ENCODE measurements at regions of chr13 and their contacts with region 1.

Region 1: DNA sequence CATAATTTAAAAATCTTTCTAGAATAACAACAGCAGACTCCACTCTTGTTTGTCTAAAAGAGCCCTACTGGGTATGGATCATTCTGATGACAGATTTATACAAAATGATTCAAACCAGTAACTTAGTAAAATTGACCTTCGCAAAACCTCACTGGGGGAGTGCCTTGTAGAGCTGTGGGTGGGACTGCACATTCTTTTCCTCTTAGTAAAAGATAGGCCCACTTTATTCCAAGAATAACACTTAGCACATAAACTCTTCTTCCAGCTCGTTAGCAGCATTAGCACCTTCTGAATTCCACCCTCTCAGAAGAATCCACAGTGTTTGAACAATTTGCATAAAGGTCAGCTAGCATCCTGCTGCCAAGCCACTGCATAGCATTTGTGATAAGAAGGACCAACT is 106.8 kb downstream of the STOML3 start:
- DNase-seq: no peak
- H3K4me3 ChIP-seq: no peak overlapping the region
- H3K27ac ChIP-seq: no peak overlapping the region
- H3K4me1 ChIP-seq: peaks cover 2% of the 10 kb centered on the region
- H3K27me3 ChIP-seq: peaks cover 8 to 24% of the 10 kb centered on the region in 2 experiments
- CTCF ChIP-seq: no peak
- POLR2A ChIP-seq: no peak

Region 2: DNA sequence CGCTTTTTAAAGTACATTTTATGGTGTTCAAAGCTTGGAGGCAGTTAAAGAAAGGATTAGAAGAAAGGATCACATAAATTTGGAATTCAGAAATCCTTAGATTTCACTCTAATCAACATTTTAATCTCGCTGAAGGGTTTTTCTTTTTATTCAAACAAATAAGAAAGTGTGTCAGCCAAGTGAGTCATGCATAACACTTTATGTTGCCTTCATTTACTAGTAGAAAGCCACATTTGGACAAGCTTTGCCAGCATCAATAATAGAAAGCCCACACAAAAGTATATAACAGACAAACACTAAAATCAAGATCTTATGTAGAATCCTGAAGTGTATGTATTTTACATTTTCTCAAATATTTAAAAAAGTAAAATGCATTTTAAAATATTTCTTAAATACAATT is 859.4 kb before region 1 on chr13:
- CTCF ChIA-PET with region 1: no interaction called
- POLR2A ChIA-PET with region 1: no interaction called
- dilution Hi-C with region 1: no loop called
- intact Hi-C with region 1: no loop called
- DNase-seq: peak; percentile 10
- H3K4me3 ChIP-seq: no peak overlapping the region
- H3K27ac ChIP-seq: no peak overlapping the region
- H3K4me1 ChIP-seq: no peaks in the 10 kb centered on the region
- H3K27me3 ChIP-seq: no peaks in the 10 kb centered on the region
- CTCF ChIP-seq: no peak
- POLR2A ChIP-seq: no peak

Region 3: GRCh38 chr13:38872693-38873092 is 11.1 kb before region 1 on chr13:
- CTCF ChIA-PET with region 1: interaction called, 13 read pairs
- POLR2A ChIA-PET with region 1: no interaction called
- dilution Hi-C with region 1: no loop called
- intact Hi-C with region 1: no loop called
- DNase-seq: peak; percentile 21
- H3K4me3 ChIP-seq: no peak overlapping the region
- H3K27ac ChIP-seq: no peak overlapping the region
- H3K4me1 ChIP-seq: no peaks in the 10 kb centered on the region
- H3K27me3 ChIP-seq: peaks cover 7 to 9% of the 10 kb centered on the region in 2 experiments
- CTCF ChIP-seq: peak; percentile 24 to 33
- POLR2A ChIP-seq: no peak

Region 4: GRCh38 chr13:39347926-39348901 is 464.4 kb after region 1 on chr13:
- CTCF ChIA-PET with region 1: no interaction called
- POLR2A ChIA-PET with region 1: no interaction called
- dilution Hi-C with region 1: no loop called
- intact Hi-C with region 1: no loop called
- DNase-seq: no peak
- H3K4me3 ChIP-seq: no peak overlapping the region
- H3K27ac ChIP-seq: no peak overlapping the region
- H3K4me1 ChIP-seq: no peaks in the 10 kb centered on the region
- H3K27me3 ChIP-seq: no peaks in the 10 kb centered on the region
- CTCF ChIP-seq: no peak
- POLR2A ChIP-seq: no peak